MCF 10A (cell line): ENCODE measurements at regions of chr5 and their contacts with region 1.

Region 1: GRCh38 chr5:154405078-154405792 is 40.6 kb upstream of the SAP30L start:
- DNase-seq: peak; percentile 85
- H3K4me3 Mint-ChIP-seq: peak overlapping the region; percentile 51
- H3K27ac Mint-ChIP-seq: no peak overlapping the region
- H3K4me1 Mint-ChIP-seq: peaks cover 7% of the 10 kb centered on the region
- H3K27me3 Mint-ChIP-seq: no peaks in the 10 kb centered on the region
- CTCF ChIP-seq: peak; percentile 98

Region 2: GRCh38 chr5:154072414-154073171 is 332.6 kb before region 1 on chr5:
- CTCF ChIA-PET with region 1: interaction called, 265 read pairs
- POLR2A ChIA-PET with region 1: interaction called, 6 read pairs
- intact Hi-C with region 1: loop called (anchors 1 kb)
- DNase-seq: peak; percentile 87
- H3K4me3 Mint-ChIP-seq: no peak overlapping the region
- H3K27ac Mint-ChIP-seq: no peak overlapping the region
- H3K4me1 Mint-ChIP-seq: peaks cover 5% of the 10 kb centered on the region
- H3K27me3 Mint-ChIP-seq: no peaks in the 10 kb centered on the region
- CTCF ChIP-seq: peak; percentile 99

Region 3: GRCh38 chr5:154174091-154174490 is 231.1 kb before region 1 on chr5:
- CTCF ChIA-PET with region 1: interaction called, 125 read pairs
- POLR2A ChIA-PET with region 1: no interaction called
- intact Hi-C with region 1: no loop called
- DNase-seq: no peak
- H3K4me3 Mint-ChIP-seq: no peak overlapping the region
- H3K27ac Mint-ChIP-seq: no peak overlapping the region
- H3K4me1 Mint-ChIP-seq: peaks cover 15% of the 10 kb centered on the region
- H3K27me3 Mint-ChIP-seq: peaks cover 20% of the 10 kb centered on the region
- CTCF ChIP-seq: no peak

Region 4: GRCh38 chr5:154214371-154215106 is 190.7 kb before region 1 on chr5:
- CTCF ChIA-PET with region 1: interaction called, 25 read pairs
- POLR2A ChIA-PET with region 1: interaction called, 5 read pairs
- intact Hi-C with region 1: no loop called
- DNase-seq: peak; percentile 92
- H3K4me3 Mint-ChIP-seq: peak overlapping the region; percentile 63
- H3K27ac Mint-ChIP-seq: peak overlapping the region; percentile 85
- H3K4me1 Mint-ChIP-seq: peaks cover 27% of the 10 kb centered on the region
- H3K27me3 Mint-ChIP-seq: no peaks in the 10 kb centered on the region
- CTCF ChIP-seq: no peak

Region 5: GRCh38 chr5:154384480-154385235 is 20.6 kb before region 1 on chr5:
- CTCF ChIA-PET with region 1: interaction called, 18 read pairs
- POLR2A ChIA-PET with region 1: interaction called, 3 read pairs
- intact Hi-C with region 1: no loop called
- DNase-seq: no peak
- H3K4me3 Mint-ChIP-seq: no peak overlapping the region
- H3K27ac Mint-ChIP-seq: no peak overlapping the region
- H3K4me1 Mint-ChIP-seq: no peaks in the 10 kb centered on the region
- H3K27me3 Mint-ChIP-seq: no peaks in the 10 kb centered on the region
- CTCF ChIP-seq: no peak

Region 6: DNA sequence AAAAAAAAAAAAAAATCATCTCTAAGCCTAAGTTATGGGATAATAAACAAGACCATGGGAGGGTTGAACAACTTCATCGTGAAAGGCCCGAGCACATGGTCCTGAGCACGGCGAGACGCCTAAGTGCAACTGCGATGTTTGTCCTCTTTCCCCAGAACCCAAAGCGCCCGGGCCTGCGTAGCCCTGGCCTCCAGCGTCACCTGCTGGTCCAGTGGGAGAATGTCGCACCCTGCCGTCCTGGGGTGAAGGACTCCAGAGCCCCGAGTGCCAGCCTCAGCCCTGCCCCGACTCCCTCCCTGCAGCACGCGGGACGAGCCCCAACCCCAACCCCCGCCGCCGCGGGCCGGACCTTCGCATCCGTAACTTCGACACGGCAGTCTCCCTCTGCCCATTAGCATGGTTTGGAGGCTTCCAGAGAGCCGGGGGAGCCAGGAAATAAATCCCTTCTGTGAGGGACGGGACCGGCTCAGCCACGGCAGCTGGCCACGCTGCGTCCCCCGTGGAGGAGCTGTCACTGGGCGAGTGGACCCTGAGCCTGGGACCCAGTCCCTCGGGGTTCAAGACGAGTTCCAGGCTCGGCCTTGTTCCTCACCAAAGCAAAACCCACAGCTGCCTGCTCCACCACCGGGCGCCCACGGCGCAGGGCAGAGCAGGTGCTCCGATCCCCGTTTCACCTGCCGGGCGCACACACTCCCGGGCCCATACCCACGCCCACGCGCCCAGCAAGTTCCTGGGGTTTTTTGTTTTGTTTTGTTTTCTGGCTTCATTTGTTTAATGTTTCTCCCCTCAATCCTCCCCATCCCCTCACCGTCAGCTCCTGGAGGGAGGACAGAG is 205.3 kb after region 1 on chr5:
- CTCF ChIA-PET with region 1: interaction called, 10 read pairs
- POLR2A ChIA-PET with region 1: interaction called, 3 read pairs
- intact Hi-C with region 1: loop called (anchors 5 kb)
- DNase-seq: peak; percentile 90
- H3K4me3 Mint-ChIP-seq: peak overlapping the region; percentile 54
- H3K27ac Mint-ChIP-seq: no peak overlapping the region
- H3K4me1 Mint-ChIP-seq: peaks cover 10% of the 10 kb centered on the region
- H3K27me3 Mint-ChIP-seq: peaks cover 39% of the 10 kb centered on the region
- CTCF ChIP-seq: peak; percentile 100